Gastrocnemius medialis (tissue), 4 donors: ENCODE measurements at regions of chr14 and their contacts with region 1.

Region 1: GRCh38 chr14:70809543-70810244 is 381 bp upstream of the MAP3K9 start:
- DNase-seq: peak; percentile 77 to 95
- ATAC-seq: peak; percentile 90 to 92
- H3K4me3 ChIP-seq: peak overlapping the region; percentile 62 to 85 (median 76)
- H3K27ac ChIP-seq: peak overlapping the region; percentile 49 to 84 (median 80)
- H3K4me1 ChIP-seq: peaks cover 6 to 10% of the 10 kb centered on the region in 2 donors
- H3K27me3 ChIP-seq: peaks cover 0 to 6% (median 0%) of the 10 kb centered on the region in 3 donors
- CTCF ChIP-seq: no peak
- POLR2A ChIP-seq: no peak

Region 2: DNA sequence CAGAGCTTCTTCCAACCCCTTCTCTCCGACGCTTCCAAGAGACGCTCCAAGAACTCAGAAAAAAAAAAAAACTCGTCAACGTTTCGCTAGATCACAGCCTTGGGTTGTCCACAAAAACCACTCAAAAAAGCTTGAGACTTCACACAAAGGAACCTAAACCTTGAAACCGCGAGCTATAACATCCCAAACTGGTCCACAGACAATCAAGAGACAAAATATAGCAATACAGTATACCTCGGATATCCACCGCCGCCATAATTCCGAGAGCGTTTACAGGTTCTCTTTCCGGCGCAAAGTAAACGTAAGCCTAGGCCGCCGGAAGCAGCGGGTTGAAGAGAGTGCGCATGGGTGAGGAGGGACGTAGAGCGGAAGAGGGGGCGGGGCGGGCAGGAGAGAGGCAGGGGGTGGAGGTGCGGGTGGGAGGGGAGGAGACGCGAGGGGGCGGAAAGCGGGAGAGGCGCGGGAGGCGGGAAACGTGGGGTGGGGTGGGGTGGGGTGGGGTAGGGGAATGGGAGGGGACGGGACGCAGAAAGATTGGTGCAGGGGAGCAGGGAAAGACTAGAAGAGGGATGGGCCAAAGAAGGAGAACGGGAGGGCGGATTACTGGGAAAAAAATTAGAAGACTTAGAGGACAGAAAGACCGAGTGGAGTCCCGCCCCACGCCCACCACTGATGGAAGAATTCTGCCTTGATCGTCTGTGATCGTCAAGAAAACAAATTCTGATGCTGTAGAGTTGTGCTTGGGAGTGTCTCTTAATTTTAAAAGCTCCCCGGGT is 209.1 kb before region 1 on chr14 and contains the start of gene MED6:
- in situ Hi-C with region 1: loop called in 1 of 4 experiments (anchors 10 kb)
- intact Hi-C with region 1: no loop called
- DNase-seq: peak; percentile 87 to 91
- ATAC-seq: peak; percentile 98 to 100
- H3K4me3 ChIP-seq: peak within 1 kb of the TSS; percentile 77 to 98 (median 92)
- H3K27ac ChIP-seq: peak within 1 kb of the TSS; percentile 78 to 89 (median 80)
- H3K4me1 ChIP-seq: peaks cover 15 to 18% of the 10 kb centered on the region in 2 donors
- H3K27me3 ChIP-seq: no peaks in the 10 kb centered on the region
- CTCF ChIP-seq: no peak
- POLR2A ChIP-seq: peak in 1 of 2 donors; percentile 31
- total RNA-seq, gene MED6: 13.9 to 25.0 (median 20.2) TPM

Region 3: DNA sequence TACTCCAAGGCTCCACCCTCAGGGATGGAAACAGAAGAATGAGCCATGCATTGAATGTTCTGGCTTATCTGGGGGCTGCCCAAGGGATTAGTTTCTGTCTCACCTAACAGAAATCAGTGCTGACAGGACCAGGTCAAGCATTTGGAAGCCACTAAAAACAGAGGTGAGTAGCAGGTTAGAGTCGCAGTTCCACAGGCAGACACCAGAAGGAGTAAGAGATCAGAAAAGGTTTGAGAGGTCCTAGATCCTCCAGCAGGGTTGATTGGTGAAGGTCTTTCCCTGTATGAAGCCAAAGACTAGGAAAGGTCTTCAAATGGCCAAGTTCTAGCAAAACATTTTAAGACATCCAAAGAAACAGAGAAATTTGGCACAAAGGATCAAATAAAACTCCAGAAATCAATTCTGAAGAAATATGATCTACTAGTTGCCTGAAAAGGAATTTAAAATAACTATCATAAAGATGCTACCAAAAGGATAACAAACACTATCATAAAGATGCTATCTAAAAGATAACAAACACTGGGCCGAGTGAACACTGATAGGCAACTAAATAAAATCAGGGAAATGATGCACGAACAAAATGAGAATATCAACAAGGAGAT is 187.5 kb before region 1 on chr14:
- in situ Hi-C with region 1: loop called in 1 of 4 experiments (anchors 10 kb)
- intact Hi-C with region 1: no loop called
- DNase-seq: peak in 1 of 2 donors; percentile 17
- ATAC-seq: no peak
- H3K4me3 ChIP-seq: no peak overlapping the region
- H3K27ac ChIP-seq: no peak overlapping the region
- H3K4me1 ChIP-seq: no peaks in the 10 kb centered on the region
- H3K27me3 ChIP-seq: no peaks in the 10 kb centered on the region
- CTCF ChIP-seq: peak; percentile 28 to 67 (median 49)
- POLR2A ChIP-seq: no peak

Region 4: DNA sequence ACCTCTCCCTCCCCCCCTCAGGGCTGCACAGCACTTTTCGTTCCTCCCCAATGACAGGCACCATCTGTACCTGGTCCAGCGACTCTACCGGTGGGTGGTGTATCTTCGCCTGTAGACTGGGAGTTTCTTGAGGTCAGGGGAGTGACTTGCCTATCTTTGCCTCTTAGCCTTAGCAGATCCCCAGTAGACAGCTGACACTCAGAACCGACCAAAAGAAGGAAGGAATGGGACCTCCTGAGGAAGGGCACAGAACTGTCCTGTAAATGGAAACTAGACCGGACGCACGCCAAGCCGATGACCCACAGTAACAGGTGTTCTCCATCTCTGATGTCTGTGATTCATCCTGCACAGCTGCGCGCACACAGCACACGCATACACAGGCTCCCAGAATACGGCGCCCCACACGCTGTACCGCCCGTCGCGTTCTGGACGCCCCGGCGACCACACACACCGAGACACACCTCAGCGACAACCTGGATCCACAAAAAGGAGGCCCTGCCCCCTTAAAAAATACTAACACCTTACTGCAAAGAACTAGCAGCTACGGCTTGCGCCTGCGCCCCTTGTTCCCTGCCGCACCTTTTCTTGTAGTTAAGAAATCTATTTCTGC is 168.7 kb before region 1 on chr14:
- in situ Hi-C with region 1: no loop called
- intact Hi-C with region 1: loop called (anchors 5 kb)
- DNase-seq: peak; percentile 78 to 91
- ATAC-seq: peak; percentile 93 to 95
- H3K4me3 ChIP-seq: peak overlapping the region; percentile 68 to 78 (median 73)
- H3K27ac ChIP-seq: peak overlapping the region; percentile 84 to 91 (median 88)
- H3K4me1 ChIP-seq: peaks cover 16 to 18% of the 10 kb centered on the region in 2 donors
- H3K27me3 ChIP-seq: peaks cover 0 to 4% (median 0%) of the 10 kb centered on the region in 3 donors
- CTCF ChIP-seq: no peak
- POLR2A ChIP-seq: peak; percentile 66 to 72

Region 5: GRCh38 chr14:70663611-70664508 is 145.8 kb before region 1 on chr14:
- in situ Hi-C with region 1: no loop called
- intact Hi-C with region 1: loop called (anchors 5 kb)
- DNase-seq: peak in 1 of 2 donors; percentile 18
- ATAC-seq: peak; percentile 80 to 92
- H3K4me3 ChIP-seq: no peak overlapping the region
- H3K27ac ChIP-seq: peak overlapping the region in 3 of 4 donors; percentile 1 to 73 (median 52)
- H3K4me1 ChIP-seq: peaks cover 14 to 40% of the 10 kb centered on the region in 2 donors
- H3K27me3 ChIP-seq: no peaks in the 10 kb centered on the region
- CTCF ChIP-seq: no peak
- POLR2A ChIP-seq: no peak

Region 6: DNA sequence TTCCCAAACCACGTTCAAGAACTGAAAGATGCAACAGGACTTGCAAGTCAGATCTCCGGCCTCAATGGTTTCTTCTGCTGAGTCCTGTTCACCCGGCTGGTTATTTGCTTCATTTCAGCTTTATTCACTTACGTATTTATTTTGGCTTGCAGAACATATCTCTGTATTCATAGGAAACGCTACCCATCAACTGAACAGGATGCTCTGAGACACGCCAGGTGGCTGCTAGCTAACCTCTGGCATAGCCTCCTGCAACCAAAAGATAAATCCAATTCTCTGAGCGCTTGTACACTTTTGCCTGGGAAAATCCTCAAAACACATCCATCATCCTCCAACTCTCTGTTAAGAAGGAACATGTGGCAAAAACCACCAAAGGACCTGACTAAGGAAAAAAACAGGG is 17.7 kb before region 1 on chr14:
- in situ Hi-C with region 1: no loop called
- intact Hi-C with region 1: loop called (anchors 2 kb)
- DNase-seq: no peak
- ATAC-seq: no peak
- H3K4me3 ChIP-seq: no peak overlapping the region
- H3K27ac ChIP-seq: no peak overlapping the region
- H3K4me1 ChIP-seq: peaks cover 11 to 16% of the 10 kb centered on the region in 2 donors
- H3K27me3 ChIP-seq: no peaks in the 10 kb centered on the region
- CTCF ChIP-seq: no peak
- POLR2A ChIP-seq: no peak

Region 7: GRCh38 chr14:70821584-70822529 is 12.2 kb after region 1 on chr14:
- in situ Hi-C with region 1: no loop called
- intact Hi-C with region 1: loop called (anchors 1 kb)
- DNase-seq: peak in 1 of 2 donors; percentile 22
- ATAC-seq: peak; percentile 18 to 32
- H3K4me3 ChIP-seq: peak overlapping the region; percentile 57 to 99 (median 71)
- H3K27ac ChIP-seq: peak overlapping the region in 1 of 4 donors; percentile 16
- H3K4me1 ChIP-seq: peaks cover 10 to 14% of the 10 kb centered on the region in 2 donors
- H3K27me3 ChIP-seq: peaks cover 2 to 9% (median 6%) of the 10 kb centered on the region in 3 donors
- CTCF ChIP-seq: no peak
- POLR2A ChIP-seq: no peak